Activated T-helper 2 cell treated with anti-CD3 and anti-CD28 coated beads, Interferon-gamma antibody, Interleukin-2, Interleukin-4, amounts not matched to agents 10 μg/mL and 5 μg/mL and 100 μg/mL, durations not matched to agents 14 hours and 24 hours and 36 hours (primary cell): ENCODE measurements at regions of chr6 and their contacts with region 1.

Region 1: DNA sequence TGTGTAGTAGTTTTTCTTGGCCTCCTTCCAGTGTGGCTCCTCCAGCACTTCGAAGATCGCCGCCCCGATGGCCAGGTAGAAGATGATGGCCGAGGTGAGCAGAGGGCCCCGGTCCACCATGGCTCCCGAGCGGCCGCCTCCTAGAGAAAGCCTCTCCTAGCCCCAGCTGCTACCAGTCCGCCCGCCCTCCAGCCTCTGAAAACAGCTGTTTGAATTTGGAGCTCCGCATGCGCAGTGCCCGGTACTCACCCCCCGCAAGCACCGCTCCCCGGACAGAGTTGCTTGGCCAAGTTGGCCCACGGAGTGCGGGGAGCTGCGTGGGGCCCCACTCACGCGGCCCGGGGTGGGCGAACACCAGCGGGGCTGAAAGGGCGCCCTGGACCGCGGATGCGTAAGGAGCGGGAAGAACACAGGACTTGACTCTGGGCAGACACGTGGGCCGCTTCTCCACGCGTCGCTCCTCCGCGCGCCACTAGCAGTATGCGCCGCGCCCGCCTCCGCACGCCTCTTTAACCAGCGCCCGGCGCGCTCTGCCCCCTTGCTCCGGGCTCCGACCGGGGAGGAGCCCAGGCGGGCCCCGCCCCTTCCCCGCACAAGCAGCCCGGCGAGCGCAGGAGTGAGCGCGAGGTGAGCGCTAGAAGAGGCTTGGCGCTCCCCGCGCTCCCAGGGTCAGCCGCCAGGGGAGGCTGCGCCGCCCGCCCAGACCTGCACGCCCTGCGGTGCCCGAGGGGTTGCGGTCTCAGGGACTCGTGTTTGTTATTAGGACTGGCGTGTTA is at the start of gene KCNK5:
- DNase-seq: peak; percentile 86
- H3K4me3 Mint-ChIP-seq: peak within 1 kb of the TSS; percentile 89
- H3K27ac Mint-ChIP-seq: peak within 1 kb of the TSS; percentile 72
- H3K4me1 Mint-ChIP-seq: peaks cover 32% of the 10 kb centered on the region
- H3K27me3 Mint-ChIP-seq: no peaks in the 10 kb centered on the region
- total RNA-seq, gene KCNK5: 41.5 and 42.6 TPM in 2 replicates

Region 2: DNA sequence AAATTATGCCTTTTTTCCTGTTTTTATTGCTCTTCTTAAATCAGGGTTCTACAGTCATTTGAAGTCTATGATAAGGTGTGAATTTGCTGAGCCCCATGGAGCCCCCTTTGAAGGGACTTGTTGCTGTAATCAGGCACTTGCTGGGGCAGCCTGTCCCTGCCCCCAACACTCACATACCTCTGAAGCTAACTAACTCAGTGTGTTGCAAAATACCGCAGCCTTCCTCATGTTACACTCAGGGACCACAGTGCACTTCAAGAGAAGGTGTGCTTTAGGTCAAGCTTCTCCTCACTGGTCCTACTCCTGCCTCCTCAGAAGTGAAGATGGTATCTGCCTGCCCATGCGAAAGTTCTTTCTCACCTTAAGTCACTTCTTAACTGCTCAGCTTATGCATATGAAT is 246.7 kb before region 1 on chr6:
- intact Hi-C with region 1: no loop called
- DNase-seq: no peak
- H3K4me3 Mint-ChIP-seq: no peak overlapping the region
- H3K27ac Mint-ChIP-seq: no peak overlapping the region
- H3K4me1 Mint-ChIP-seq: no peaks in the 10 kb centered on the region
- H3K27me3 Mint-ChIP-seq: peaks cover 30% of the 10 kb centered on the region

Region 3: GRCh38 chr6:39153766-39154397 is 75.3 kb before region 1 on chr6:
- intact Hi-C with region 1: loop called (anchors 2 kb)
- DNase-seq: no peak
- H3K4me3 Mint-ChIP-seq: no peak overlapping the region
- H3K27ac Mint-ChIP-seq: peak overlapping the region; percentile 80
- H3K4me1 Mint-ChIP-seq: peaks cover 49% of the 10 kb centered on the region
- H3K27me3 Mint-ChIP-seq: no peaks in the 10 kb centered on the region

Region 4: GRCh38 chr6:39189915-39190544 is 39.1 kb before region 1 on chr6:
- intact Hi-C with region 1: loop called (anchors 5 kb)
- DNase-seq: no peak
- H3K4me3 Mint-ChIP-seq: no peak overlapping the region
- H3K27ac Mint-ChIP-seq: no peak overlapping the region
- H3K4me1 Mint-ChIP-seq: peaks cover 28% of the 10 kb centered on the region
- H3K27me3 Mint-ChIP-seq: no peaks in the 10 kb centered on the region

Region 5: DNA sequence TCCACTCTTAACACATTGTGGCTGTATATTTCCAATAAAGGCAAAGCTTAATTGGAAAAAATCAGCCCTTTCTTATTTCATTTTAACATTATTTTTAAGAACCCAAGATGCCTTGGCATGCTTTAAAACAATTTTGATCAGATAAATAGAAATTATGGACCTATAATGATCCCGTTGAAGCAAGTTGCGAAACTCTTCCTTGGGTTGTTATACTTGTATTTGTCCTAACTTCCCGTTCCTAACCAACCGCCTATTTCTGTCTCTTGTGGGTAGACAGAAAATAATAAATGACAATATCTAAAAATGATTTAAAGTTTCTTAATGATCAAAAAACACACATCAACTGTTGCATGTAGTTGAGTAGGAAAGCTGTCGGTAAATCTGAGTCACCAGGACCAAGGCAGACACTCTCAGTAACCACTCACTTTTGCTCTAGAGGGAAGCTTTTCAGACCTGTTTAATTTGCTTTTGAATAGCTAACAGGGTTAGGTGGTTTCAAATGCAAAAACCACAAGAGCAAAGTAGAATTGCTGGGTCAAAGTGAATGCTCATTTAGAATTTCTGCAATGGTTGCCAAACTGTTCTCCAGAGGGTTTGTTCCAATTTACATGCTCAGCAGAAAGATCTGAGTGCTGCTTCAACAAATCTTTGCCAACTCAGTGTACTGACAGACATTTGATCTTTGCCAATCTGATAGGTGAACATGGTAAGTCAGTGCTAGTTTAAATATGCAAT is 34.3 kb after region 1 on chr6:
- intact Hi-C with region 1: loop called (anchors 2 kb)
- DNase-seq: peak; percentile 9
- H3K4me3 Mint-ChIP-seq: no peak overlapping the region
- H3K27ac Mint-ChIP-seq: no peak overlapping the region
- H3K4me1 Mint-ChIP-seq: peaks cover 15% of the 10 kb centered on the region
- H3K27me3 Mint-ChIP-seq: peaks cover 12% of the 10 kb centered on the region

Region 6: GRCh38 chr6:39302669-39303424 is 73.7 kb after region 1 on chr6:
- intact Hi-C with region 1: loop called (anchors 1 kb)
- DNase-seq: peak; percentile 77
- H3K4me3 Mint-ChIP-seq: peak overlapping the region; percentile 40
- H3K27ac Mint-ChIP-seq: peak overlapping the region; percentile 20
- H3K4me1 Mint-ChIP-seq: peaks cover 8% of the 10 kb centered on the region
- H3K27me3 Mint-ChIP-seq: peaks cover 4% of the 10 kb centered on the region